Upper lobe of right lung (tissue), 1 donor: ENCODE measurements at regions of chr11 and their contacts with region 1.

Region 1: DNA sequence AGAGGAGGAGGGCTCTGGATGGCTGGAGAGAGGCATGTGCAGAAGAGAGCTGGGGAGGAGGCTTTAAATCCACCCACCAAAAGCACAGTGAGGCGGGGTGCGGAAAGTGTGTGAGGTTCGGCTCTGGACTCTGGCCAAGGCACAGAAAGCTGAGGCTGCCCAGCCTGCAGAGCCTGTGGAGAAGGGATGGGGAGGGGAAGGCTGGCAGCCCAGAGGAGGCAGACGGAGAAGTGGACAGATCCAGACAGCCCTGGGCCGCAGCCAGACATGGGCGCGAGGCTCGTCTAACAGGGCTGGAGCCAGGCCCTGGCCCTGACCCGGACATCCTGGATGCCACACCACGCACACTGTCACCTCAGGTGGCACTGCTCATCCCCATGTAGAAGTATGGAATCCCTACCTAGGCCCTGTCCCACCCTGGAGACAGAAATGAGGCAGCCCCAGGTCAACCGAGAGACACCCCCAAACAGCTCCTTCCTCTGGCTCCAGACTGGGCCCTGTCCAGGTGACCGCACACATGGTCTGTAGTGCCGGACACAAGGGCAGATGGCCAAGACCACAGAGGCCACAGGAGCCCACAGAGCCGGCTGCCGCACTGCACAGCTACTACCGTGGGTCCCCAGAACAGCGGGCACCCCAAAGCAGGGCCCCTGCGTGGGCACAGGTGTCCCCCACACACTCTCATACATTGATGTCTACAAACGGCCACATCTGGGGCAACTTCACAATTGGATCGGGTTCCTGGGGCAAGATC is 16.6 kb upstream of the MOB2 start:
- DNase-seq: no peak
- ATAC-seq: peak; percentile 15
- H3K4me3 ChIP-seq: no peak overlapping the region
- H3K27ac ChIP-seq: no peak overlapping the region
- H3K4me1 ChIP-seq: peaks cover 35% of the 10 kb centered on the region
- H3K27me3 ChIP-seq: no peaks in the 10 kb centered on the region
- CTCF ChIP-seq: no peak

Region 2: DNA sequence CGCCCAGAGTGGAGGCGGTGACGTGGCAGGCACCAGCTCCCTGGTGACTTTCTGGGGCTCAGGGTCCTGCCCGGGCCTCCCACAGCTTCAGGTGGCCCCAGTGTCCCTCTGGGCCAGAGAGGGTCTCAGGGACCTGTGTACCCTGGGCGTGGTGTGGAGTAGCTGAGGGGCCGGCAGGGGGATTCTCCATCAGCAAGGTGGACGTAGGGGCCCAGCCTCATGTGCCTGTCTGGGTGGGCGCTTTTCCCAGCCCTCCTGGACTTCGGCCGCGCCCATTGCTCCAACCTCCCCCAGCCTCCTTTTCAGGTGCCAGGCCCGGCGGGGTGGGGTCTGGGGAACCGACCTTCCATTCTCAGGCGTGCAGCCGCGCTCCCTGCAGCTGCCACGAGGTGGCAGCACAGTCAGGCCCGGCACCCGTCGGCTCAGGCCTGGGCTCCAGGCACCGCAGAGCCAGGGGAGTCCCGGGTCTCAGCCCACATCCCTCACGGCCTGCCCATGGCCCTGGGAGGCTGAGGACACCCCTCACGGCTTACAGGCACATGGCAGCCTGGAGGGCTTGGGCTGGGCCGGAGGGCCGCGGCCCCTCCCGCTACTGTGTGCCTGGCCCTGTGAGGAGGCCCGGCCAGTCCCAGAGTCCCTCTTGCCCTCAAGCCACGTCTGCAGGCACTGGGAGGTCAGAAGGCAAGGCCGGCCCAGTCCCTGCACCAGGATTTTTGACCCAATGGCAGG is 300.2 kb before region 1 on chr11:
- intact Hi-C with region 1: loop called (anchors 10 kb)
- DNase-seq: peak; percentile 77
- ATAC-seq: peak; percentile 81
- H3K4me3 ChIP-seq: no peak overlapping the region
- H3K27ac ChIP-seq: no peak overlapping the region
- H3K4me1 ChIP-seq: no peaks in the 10 kb centered on the region
- H3K27me3 ChIP-seq: peaks cover 42% of the 10 kb centered on the region
- CTCF ChIP-seq: peak; percentile 91